ENCODE measurements at regions of chr20 and their contacts with region 1.

Region 1: GRCh38 chr20:20837574-20838021 is 125.2 kb upstream of the RALGAPA2 start:
- DNase-seq: peak; percentile 68
- ATAC-seq: peak; percentile 80

Region 2: DNA sequence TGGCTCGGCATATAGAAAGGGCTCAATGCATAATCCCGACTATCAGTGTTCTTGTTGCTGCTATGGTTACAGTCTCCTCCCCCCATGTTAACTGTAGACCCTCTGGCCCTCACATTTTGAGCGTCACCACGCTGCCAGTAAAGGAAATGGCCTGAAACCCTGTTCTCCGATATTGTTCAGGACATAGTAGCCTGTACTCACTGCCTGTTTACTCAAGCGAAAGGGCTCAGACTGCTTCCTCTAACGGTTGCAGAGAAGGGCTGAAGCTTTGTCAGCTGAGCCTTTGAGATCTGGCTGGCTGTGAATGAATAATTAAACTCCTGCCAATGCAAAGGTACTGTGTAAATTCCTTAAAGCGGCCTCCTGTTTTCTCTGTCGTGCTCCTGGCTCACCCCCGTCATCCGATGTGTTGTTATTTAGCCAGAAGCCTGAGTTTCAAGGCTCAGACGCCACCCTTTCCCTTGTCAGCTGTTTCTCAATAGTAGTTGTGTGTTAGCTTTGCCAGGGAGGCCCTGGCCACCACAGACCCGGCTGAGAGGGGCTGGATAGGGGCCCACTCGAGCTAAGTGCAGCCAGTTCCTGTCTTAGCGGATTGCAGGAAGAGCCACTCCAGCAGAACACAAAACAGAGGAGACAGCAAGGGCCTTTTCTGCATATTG is 94.0 kb before region 1 on chr20:
- intact Hi-C with region 1: no loop called
- DNase-seq: peak; percentile 88
- ATAC-seq: peak; percentile 97

Region 3: GRCh38 chr20:21063276-21063675 is 225.7 kb after region 1 on chr20:
- intact Hi-C with region 1: no loop called
- DNase-seq: no peak
- ATAC-seq: no peak

Region 4: DNA sequence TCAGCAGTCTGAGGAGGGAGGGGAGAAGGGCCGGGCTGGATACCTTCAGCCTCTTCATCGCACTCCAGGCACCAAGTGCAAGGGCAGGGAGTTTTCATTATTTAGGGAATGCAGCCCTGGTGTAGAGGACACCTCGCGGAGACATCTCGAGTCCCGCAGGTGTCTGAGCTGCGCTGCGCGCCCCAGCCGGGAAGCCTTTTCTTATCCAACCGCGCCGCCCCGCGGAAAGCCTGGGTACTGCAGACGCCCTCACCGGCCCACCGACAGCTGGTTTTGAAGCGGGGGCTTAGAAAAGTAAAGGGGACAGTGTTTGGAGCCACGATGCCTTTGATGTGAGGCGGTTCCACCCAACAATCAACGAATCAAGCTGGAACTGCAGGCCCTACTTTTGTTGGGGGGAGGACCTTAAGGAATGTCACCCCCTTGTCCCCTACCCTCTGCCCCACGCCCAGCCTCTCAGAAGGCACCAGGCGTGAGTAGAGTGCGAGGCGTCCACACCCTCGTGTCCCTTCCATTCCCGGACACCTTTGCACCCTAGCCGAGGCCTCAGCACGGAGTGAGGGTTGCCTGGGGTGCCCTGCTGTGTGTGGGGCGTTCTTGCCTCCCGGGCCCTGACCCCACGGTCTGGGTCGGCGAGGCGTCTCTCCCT is 667.7 kb after region 1 on chr20:
- intact Hi-C with region 1: loop called (anchors 10 kb)
- DNase-seq: peak; percentile 84
- ATAC-seq: peak; percentile 87

Region 5: DNA sequence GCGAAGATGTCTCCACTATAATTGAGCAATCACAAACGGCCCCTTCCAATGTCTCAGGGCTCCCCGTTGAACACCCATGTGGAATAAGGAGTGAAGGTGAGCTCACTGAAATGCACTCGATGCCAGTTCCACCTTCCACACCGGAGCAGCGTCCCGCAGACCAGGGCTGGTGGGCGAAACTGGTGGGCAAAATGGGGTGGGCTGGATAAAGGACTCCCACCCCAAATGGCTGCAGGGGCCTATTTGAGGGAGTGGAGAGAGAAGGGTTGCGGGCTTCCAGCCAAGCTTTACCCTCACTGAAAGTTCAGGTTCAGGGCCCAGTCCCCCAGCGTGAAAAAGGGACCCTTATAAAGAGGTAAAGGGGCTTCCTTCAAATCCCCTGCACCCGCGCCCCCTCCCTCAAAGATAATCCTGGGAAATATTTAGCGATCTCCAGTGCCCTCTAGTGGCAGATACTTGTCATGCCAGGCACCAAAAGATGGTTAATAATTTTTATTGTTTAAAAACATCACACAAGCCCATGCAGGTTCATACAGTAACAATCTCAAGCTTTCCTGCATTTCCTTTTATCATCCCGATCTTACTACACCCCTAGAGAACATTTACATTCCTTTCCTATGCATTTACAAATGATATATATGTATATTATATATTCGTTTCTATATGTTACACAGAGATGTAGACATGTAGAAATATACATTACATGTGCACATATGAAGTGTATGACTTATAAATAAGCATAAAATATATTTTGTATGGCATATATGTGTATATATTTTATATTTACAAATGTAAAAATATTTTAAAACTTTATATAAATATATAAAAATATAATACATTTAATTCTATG is 734.5 kb after region 1 on chr20:
- intact Hi-C with region 1: loop called (anchors 10 kb)
- DNase-seq: no peak
- ATAC-seq: no peak